ENCODE measurements at regions of chr12 and their contacts with region 1.

Region 1: GRCh38 chr12:6341417-6342139 is at the start of gene TNFRSF1A:
- DNase-seq: peak; percentile 67
- ATAC-seq: peak; percentile 43
- H3K4me3 Mint-ChIP-seq: no peak within 1 kb of the TSS
- H3K27ac Mint-ChIP-seq: no peak within 1 kb of the TSS
- H3K4me1 Mint-ChIP-seq: peaks cover 37% of the 10 kb centered on the region
- H3K27me3 Mint-ChIP-seq: no peaks in the 10 kb centered on the region
- total RNA-seq, gene TNFRSF1A: 58.8 to 63.4 TPM

Region 2: GRCh38 chr12:6323340-6323994 is 18.1 kb before region 1 on chr12:
- CTCF ChIA-PET with region 1: interaction called, 45 read pairs
- POLR2A ChIA-PET with region 1: interaction called, 4 read pairs
- DNase-seq: peak; percentile 60
- ATAC-seq: peak; percentile 73
- H3K4me3 Mint-ChIP-seq: peak overlapping the region; percentile 45
- H3K27ac Mint-ChIP-seq: peak overlapping the region; percentile 87
- H3K4me1 Mint-ChIP-seq: peaks cover 62% of the 10 kb centered on the region
- H3K27me3 Mint-ChIP-seq: no peaks in the 10 kb centered on the region